ENCODE measurements at regions of chr18 and their contacts with region 1.

Region 1: DNA sequence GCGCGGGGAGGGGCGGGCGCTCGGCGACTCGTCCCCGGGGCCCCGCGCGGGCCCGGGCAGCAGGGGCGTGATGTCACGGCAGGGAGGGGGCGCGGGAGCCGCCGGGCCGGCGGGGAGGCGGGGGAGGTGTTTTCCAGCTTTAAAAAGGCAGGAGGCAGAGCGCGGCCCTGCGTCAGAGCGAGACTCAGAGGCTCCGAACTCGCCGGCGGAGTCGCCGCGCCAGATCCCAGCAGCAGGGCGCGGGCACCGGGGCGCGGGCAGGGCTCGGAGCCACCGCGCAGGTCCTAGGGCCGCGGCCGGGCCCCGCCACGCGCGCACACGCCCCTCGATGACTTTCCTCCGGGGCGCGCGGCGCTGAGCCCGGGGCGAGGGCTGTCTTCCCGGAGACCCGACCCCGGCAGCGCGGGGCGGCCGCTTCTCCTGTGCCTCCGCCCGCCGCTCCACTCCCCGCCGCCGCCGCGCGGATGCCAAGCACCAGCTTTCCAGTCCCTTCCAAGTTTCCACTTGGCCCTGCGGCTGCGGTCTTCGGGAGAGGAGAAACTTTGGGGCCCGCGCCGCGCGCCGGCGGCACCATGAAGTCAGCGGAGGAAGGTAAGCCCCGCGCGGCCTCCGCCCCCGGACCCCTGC is at the start of gene NFATC1:
- DNase-seq: peak; percentile 95
- ATAC-seq: peak; percentile 62
- total RNA-seq, gene NFATC1: 80.3 TPM

Region 2: DNA sequence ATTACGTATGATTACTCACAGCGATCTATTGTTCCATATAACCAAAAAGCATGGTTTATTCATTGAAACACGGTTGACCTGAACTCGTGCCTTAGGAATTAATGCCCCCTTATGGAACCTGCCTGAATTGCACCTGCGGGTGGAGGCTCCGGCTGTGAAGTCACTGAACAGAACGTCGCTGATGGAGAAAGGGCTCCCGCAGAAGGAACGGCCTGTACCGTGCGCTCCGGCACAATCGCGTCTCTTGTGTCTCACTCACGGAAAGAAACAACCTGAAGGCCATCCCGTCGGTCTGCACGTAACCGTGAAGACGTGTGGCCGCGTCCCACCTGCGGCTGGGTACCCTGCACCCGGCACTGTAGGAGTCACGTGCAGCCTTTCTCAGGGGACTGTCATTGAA is 133.0 kb after region 1 on chr18:
- intact Hi-C with region 1: loop called (anchors 5 kb)
- DNase-seq: peak; percentile 84
- ATAC-seq: peak; percentile 69

Measured in sciatic nerve (tissue), 2 donors.